ENCODE measurements at regions of chr12 and their contacts with region 1.

Region 1: DNA sequence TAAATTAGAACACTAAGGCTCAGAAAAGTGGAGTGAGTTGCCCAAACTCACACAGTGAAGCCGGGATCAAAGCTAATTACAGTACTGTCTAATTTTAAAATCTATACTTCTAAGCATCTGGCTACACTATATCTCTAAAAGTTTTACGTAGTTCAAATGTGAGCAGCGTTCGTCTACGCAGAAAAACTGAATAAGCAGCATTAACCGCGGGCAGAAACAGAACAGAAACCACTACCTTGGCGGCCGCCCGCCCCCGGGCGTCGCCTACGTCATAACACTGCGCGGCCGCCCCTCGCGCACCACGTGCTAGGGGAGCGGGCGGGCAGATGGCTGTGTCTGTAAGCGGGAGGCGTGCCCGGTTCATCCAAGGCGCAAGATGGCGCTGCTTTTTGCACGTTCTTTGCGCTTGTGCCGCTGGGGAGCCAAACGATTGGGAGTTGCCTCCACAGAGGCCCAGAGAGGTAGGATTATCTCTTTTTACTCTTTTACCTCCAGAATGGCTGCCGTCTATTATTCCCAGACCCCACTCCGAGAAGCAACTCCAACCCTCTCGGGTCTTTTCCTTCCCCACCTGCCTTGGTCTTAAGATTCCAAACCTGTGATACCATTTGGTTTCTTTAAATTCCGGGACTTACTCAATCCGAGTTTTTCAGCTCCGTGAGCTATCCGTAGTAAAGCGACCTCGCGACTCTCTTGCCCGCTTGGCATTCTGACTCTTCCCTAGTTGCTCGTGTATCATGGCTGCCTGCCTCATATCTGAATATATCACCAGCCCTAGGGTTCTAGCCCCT is at the start of gene SPRYD4:
- DNase-seq: peak; percentile 90 to 95 (median 93)
- H3K4me3 ChIP-seq: peak within 1 kb of the TSS; percentile 80
- H3K27ac ChIP-seq: peak within 1 kb of the TSS; percentile 60 to 78
- H3K4me1 ChIP-seq: no peaks in the 10 kb centered on the region
- H3K27me3 ChIP-seq: no peaks in the 10 kb centered on the region
- CTCF ChIP-seq: peak; percentile 8 to 51 (median 30)
- EP300 ChIP-seq: no peak
- POLR2A ChIP-seq: peak; percentile 91
- total RNA-seq, gene SPRYD4: 1.4 to 4.1 (median 3.2) TPM

Region 2: DNA sequence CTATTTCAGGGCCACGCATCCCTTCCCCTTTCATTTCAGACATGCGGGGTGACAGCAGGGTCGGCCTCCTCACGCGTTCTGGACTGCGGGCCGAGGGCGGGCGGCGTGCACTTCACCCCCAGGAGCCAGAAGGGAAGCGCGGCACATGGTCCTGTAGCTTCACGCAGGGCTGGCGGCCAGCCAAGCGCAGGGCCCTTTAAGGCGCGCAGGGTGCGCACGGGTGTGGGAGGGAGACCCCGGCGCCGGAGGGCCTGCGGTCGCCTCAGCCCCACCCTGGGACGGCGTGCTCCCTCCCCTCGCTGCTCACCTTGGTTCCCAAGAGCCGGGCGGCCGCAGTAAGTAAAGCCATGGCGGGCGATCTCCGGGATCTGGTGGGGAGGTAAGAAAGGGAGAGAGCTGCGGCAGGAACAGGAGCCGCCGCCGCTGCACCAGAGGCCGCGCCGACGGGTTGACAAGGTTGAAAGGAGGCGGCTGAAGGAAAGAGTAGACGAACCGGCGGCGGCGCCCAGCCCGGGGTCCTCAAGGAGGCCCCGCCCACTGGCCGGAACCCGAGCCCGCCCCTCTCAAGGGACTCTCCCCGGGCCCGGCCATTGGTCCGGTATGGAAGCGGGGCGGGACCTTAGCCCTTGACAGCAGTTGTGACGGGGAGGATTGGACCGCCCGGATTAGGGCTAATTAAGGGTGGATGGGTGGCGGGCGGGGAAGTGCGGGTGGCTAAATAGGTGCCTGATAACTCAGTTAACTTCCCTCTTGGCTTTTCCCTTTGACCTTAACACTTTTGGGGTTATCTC is 168.4 kb before region 1 on chr12 and contains the start of gene CS:
- intact Hi-C with region 1: loop called in 1 of 4 experiments (anchors 10 kb)
- DNase-seq: peak; percentile 98 to 99 (median 99)
- H3K4me3 ChIP-seq: peak within 1 kb of the TSS; percentile 99
- H3K27ac ChIP-seq: peak within 1 kb of the TSS; percentile 53 to 89
- H3K4me1 ChIP-seq: peaks cover 13% of the 10 kb centered on the region
- H3K27me3 ChIP-seq: no peaks in the 10 kb centered on the region
- CTCF ChIP-seq: peak in 1 of 3 donors; percentile 17
- EP300 ChIP-seq: no peak
- POLR2A ChIP-seq: peak; percentile 42
- total RNA-seq, gene CS: 49.6 to 155 (median 137) TPM

Region 3: GRCh38 chr12:56333679-56334489 is 134.5 kb before region 1 on chr12 and contains the start of gene PAN2:
- intact Hi-C with region 1: loop called in 1 of 4 experiments (anchors 10 kb)
- DNase-seq: peak; percentile 93 to 97 (median 95)
- H3K4me3 ChIP-seq: peak within 1 kb of the TSS; percentile 49
- H3K27ac ChIP-seq: peak within 1 kb of the TSS; percentile 91 to 93
- H3K4me1 ChIP-seq: peaks cover 7% of the 10 kb centered on the region
- H3K27me3 ChIP-seq: no peaks in the 10 kb centered on the region
- CTCF ChIP-seq: peak; percentile 17 to 71 (median 68)
- EP300 ChIP-seq: no peak
- POLR2A ChIP-seq: peak; percentile 90
- total RNA-seq, gene PAN2: 41.0 to 103 (median 74.5) TPM

Region 4: GRCh38 chr12:56391721-56392120 is 76.7 kb before region 1 on chr12:
- intact Hi-C with region 1: no loop called
- DNase-seq: no peak
- H3K4me3 ChIP-seq: no peak overlapping the region
- H3K27ac ChIP-seq: no peak overlapping the region
- H3K4me1 ChIP-seq: no peaks in the 10 kb centered on the region
- H3K27me3 ChIP-seq: no peaks in the 10 kb centered on the region
- CTCF ChIP-seq: no peak
- EP300 ChIP-seq: no peak
- POLR2A ChIP-seq: no peak